ENCODE measurements at regions of chr11 and their contacts with region 1.

Region 1: DNA sequence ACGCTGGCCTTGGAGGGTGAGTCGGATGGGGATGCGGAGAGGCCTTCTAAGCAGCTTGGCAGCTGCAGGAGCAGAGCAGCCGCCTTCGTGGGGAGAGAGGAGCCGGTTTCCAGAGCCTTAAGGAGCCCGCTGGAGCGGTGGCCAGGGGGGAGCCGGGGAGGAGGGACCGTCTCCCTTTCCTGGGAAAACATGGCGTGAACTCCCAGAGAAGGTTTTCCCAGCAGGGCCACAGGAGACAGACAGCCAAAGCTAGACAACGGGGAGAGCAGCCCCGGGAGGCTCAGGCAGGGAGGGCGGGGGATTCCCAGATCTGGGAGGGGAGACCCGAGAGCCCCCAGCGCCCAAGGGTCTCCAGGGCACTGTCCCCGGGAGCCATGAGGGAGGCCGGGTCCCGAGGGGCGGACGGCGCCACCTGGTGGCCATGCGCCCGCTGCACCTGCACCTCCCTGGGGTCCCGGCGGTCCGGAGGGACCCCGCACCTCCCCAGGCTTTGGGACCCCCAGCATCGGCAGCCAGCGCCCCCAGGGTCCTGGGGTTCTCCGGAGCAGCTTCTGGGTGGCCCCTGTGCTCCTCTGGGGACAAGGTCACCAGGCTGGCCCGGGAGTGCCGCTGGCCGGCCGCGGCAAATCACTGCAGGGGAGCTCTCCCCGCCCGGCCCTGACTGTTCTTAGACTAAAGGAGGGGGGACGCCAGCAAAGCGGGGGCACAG is 2.4 kb upstream of the SYT8 start:
- DNase-seq: peak; percentile 76
- ATAC-seq: peak; percentile 80
- H3K4me3 Mint-ChIP-seq: no peak overlapping the region
- H3K27ac Mint-ChIP-seq: no peak overlapping the region
- H3K4me1 Mint-ChIP-seq: peaks cover 1% of the 10 kb centered on the region
- H3K27me3 Mint-ChIP-seq: peaks cover 20% of the 10 kb centered on the region
- CTCF ChIP-seq: peak; percentile 82

Region 2: DNA sequence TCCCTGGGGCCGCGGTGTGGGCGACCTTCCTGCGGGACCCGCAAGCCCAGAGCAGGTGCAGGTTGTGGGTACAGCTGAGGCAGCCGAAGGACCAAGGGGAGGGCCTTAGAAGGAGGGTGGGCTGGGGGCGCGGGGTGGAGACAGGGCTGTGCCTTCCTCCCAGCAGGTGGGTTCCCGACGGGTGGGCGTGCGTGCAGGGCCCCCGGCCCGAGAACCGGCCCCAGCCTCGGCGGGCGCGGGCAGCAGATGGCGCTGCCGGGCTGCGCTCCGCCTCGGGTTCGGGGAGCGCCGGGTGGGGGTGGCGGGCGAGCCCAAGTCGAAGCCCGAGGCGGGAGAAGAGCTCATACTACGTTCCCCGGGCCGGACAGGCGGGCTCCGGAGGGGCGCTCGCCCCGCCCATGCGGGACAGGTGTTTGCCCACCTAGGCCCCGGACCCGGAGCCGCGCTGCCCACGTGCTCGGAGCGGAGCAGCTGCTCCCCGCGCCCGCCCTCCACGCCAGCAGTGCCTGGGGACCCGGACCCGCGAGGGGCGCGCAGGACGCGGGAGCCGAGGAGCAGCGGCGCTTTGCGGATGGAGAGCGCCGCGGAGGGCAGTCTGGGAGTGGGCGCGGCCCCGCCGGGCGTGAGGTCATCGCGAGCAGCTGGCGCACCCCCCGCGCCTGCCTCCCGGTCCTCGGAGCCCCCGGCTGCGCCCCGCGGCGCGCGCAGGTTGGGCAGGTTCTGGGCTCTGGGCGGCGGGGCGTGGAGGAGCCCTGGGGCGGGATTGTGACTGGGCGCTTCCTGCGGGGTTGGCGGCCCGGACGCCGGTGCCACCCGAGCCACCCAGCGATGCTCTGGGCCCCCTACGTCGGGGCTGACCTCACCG is 285.6 kb before region 1 on chr11:
- CTCF ChIA-PET with region 1: no interaction called
- POLR2A ChIA-PET with region 1: no interaction called
- intact Hi-C with region 1: loop called (anchors 2 kb)
- DNase-seq: peak; percentile 50
- ATAC-seq: peak; percentile 67
- H3K4me3 Mint-ChIP-seq: peak overlapping the region; percentile 19
- H3K27ac Mint-ChIP-seq: no peak overlapping the region
- H3K4me1 Mint-ChIP-seq: peaks cover 13% of the 10 kb centered on the region
- H3K27me3 Mint-ChIP-seq: peaks cover 28% of the 10 kb centered on the region
- CTCF ChIP-seq: no peak

Region 3: DNA sequence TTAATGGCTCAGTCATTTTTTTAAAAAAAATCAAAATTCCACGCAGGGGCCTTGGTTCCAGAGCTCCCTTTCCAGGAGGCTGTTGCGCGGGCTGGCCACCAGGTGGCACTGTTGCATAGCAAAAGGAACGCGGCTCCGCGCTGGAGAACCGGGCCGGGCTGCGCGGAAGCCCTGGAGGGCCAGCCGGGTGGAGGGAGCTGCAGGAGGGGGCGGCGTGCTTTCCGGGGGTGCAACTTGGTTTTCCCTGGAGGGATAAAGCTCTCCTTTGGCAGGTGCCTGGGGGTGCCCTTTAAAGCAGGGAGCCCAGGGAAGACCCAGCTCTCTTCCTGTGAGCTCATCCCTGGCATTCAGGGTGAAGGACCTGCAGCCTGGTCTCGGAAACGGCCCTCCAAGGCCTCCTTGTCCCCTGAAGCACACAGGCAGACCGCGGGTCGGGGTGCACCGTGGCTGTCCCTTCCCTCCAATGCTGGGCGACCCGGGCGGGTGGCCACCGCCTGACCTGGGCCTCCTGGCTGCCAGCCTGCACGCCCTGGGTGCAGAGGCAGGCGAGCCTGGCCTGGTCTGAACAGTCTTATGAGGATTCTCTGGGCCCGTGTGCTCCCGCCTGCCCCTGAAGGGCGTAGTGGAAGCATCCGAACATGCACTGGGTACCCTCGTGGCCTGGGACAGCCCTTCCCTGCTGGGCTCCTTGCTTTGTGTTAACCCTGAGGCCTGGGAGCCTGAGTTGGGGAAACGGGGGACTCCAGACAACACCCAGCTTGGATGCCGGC is 179.4 kb before region 1 on chr11:
- CTCF ChIA-PET with region 1: interaction called, 61 read pairs
- POLR2A ChIA-PET with region 1: no interaction called
- intact Hi-C with region 1: loop called (anchors 1 kb)
- DNase-seq: peak; percentile 74
- ATAC-seq: peak; percentile 91
- H3K4me3 Mint-ChIP-seq: no peak overlapping the region
- H3K27ac Mint-ChIP-seq: no peak overlapping the region
- H3K4me1 Mint-ChIP-seq: no peaks in the 10 kb centered on the region
- H3K27me3 Mint-ChIP-seq: peaks cover 24% of the 10 kb centered on the region
- CTCF ChIP-seq: peak; percentile 80

Region 4: DNA sequence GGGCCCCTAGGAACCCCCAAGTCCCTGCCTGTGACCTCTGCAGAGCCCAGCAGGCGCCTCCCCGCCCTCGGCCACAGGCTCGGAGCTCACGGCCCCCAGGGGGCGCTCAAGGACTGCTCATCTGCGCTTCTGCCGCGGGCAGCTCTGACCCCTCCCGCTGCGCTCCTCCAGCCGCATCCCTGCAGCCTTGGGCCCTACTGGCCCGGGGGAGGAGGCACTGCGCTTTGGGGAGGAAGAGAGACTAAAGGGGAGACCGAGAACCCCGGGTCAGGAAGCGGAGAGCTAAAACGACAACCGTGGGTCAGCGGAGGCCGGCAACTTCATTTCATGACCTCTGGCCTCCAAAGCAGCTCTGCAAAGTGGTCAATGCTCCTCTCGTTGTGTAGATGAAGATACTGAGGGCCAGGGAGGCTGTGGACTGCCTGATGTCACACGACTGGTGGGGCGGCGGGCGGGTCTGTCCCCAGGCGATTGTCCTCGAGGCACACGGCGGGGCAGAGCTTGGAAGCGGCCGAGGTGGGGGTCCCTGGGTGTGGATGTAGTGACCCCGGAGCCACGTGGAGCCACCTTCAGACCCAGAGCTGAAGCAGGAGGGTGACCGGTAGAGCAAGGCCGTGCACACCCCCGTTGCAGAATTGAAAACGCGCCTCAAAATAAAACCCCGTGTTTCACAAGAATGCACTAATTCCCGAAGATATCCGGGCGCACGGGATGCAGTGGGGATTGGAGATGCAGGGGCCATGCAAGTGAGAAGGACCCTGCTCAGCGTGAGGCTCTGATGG is 138.1 kb before region 1 on chr11:
- CTCF ChIA-PET with region 1: interaction called, 252 read pairs
- POLR2A ChIA-PET with region 1: interaction called, 19 read pairs
- intact Hi-C with region 1: no loop called
- DNase-seq: peak; percentile 81
- ATAC-seq: peak; percentile 91
- H3K4me3 Mint-ChIP-seq: no peak overlapping the region
- H3K27ac Mint-ChIP-seq: no peak overlapping the region
- H3K4me1 Mint-ChIP-seq: peaks cover 5% of the 10 kb centered on the region
- H3K27me3 Mint-ChIP-seq: peaks cover 22% of the 10 kb centered on the region
- CTCF ChIP-seq: no peak

Region 5: GRCh38 chr11:1701091-1701807 is 131.1 kb before region 1 on chr11:
- CTCF ChIA-PET with region 1: interaction called, 10 read pairs
- POLR2A ChIA-PET with region 1: interaction called, 3 read pairs
- intact Hi-C with region 1: no loop called
- DNase-seq: no peak
- ATAC-seq: no peak
- H3K4me3 Mint-ChIP-seq: no peak overlapping the region
- H3K27ac Mint-ChIP-seq: no peak overlapping the region
- H3K4me1 Mint-ChIP-seq: peaks cover 21% of the 10 kb centered on the region
- H3K27me3 Mint-ChIP-seq: peaks cover 4% of the 10 kb centered on the region
- CTCF ChIP-seq: no peak

Region 6: GRCh38 chr11:1882519-1883238 is 50.3 kb after region 1 on chr11:
- CTCF ChIA-PET with region 1: interaction called, 12 read pairs
- POLR2A ChIA-PET with region 1: no interaction called
- intact Hi-C with region 1: loop called (anchors 1 kb)
- DNase-seq: peak; percentile 73
- ATAC-seq: peak; percentile 83
- H3K4me3 Mint-ChIP-seq: no peak overlapping the region
- H3K27ac Mint-ChIP-seq: no peak overlapping the region
- H3K4me1 Mint-ChIP-seq: peaks cover 35% of the 10 kb centered on the region
- H3K27me3 Mint-ChIP-seq: no peaks in the 10 kb centered on the region
- CTCF ChIP-seq: no peak

Region 7: GRCh38 chr11:2002807-2003206 is 170.4 kb after region 1 on chr11:
- CTCF ChIA-PET with region 1: interaction called, 26 read pairs
- POLR2A ChIA-PET with region 1: no interaction called
- intact Hi-C with region 1: no loop called
- DNase-seq: no peak
- ATAC-seq: peak; percentile 31
- H3K4me3 Mint-ChIP-seq: no peak overlapping the region
- H3K27ac Mint-ChIP-seq: no peak overlapping the region
- H3K4me1 Mint-ChIP-seq: no peaks in the 10 kb centered on the region
- H3K27me3 Mint-ChIP-seq: no peaks in the 10 kb centered on the region
- CTCF ChIP-seq: no peak

Measured in activated B cell treated with CpG ODN at 0.5 μM for 24 hours (primary cell).